ENCODE measurements at regions of chr11 and their contacts with region 1.

Region 1: DNA sequence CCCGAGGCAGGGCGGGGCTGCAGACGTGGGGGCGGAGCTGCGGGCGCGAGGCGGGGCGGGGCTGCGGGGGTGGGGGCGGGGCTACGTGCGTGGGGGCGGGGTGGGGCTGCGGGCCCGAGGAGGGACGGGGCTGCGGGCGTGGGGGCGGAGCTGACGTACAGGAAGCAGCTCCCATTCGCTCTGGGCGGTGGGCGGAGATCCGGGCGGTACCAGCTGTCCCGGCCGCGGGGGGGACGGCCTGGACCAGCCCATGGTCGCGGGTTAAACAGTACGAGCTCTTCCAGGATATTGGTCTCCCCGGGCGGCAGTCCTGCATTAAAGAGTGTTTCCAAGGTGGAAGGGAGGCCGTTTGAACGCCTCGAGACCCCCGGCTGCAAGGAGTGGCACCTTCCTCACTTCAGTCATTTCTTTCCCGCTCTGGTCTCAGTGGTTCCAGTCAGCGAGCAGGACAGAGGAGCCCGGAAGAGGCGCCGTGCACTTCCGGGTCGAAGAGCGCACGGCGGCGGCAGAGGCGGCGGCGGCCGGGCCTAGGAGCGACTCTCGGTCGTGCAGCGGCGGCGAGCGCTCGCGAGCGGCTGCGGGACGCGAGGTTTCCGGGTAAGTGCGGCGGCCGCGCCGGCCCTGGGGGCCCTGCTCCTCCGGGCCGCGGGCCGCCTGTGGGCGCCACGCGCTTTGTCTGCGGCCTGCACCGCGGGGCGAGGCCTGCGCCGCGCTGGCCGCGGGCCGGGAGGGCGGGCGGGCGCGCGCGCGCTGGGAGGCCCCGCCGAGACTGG is at the start of gene PHRF1:
- DNase-seq: peak; percentile 95
- H3K4me3 Mint-ChIP-seq: peak within 1 kb of the TSS; percentile 87
- H3K27ac Mint-ChIP-seq: peak within 1 kb of the TSS; percentile 98
- H3K4me1 Mint-ChIP-seq: peaks cover 45% of the 10 kb centered on the region
- H3K27me3 Mint-ChIP-seq: peaks cover 5% of the 10 kb centered on the region
- total RNA-seq, gene PHRF1: 32.4 to 33.5 TPM

Region 2: DNA sequence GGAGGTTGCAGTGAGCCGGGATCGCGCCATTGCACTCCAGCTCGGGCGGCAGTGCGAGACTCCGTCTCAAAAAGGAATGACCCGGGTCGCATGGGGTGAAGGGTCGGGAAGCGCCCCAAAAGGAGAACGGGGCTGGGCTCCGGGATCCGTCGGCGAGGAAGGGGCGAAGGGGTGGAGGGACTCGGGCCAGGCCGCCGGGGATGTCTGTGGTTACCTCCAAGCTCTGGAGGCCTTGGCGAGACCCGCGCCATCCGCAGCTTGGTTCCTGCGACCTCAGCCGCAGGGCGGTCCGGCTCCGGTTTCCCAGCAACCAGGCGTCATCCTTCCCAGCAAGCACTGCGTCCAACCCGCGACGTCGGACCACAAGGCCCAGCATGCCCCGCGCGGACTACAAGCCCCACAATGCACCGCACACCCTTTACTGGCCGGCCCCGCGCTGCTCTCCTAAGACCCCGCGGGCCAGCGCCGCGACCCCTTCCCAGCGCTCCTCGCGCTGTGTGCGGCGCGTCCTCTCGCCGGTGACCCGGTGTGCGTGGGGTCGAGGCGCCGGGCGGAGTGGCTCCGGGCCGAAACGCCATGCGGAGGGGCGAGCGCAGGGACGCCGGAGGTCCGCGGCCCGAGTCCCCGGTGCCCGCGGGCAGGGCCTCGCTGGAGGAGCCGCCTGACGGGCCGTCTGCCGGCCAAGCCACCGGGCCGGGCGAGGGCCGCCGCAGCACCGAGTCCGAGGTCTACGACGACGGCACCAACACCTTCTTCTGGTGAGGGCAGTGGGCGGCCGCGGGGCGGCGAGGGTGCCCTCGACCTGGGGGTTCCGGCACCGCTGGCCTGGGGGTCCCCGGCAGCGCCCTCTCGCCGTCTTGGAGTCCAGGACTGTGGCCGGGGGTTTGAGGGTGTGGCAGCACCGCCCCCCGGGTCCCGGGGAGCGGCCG is 126.0 kb before region 1 on chr11 and contains the start of gene PTDSS2:
- CTCF ChIA-PET with region 1: no interaction called
- POLR2A ChIA-PET with region 1: no interaction called
- intact Hi-C with region 1: no loop called
- DNase-seq: peak; percentile 97
- H3K4me3 Mint-ChIP-seq: peak within 1 kb of the TSS; percentile 90
- H3K27ac Mint-ChIP-seq: peak within 1 kb of the TSS; percentile 95
- H3K4me1 Mint-ChIP-seq: peaks cover 23% of the 10 kb centered on the region
- H3K27me3 Mint-ChIP-seq: no peaks in the 10 kb centered on the region
- total RNA-seq, gene PTDSS2: 15.0 to 16.7 TPM

Region 3: GRCh38 chr11:560305-561147 is 15.7 kb before region 1 on chr11 and contains the starts of genes LMNTD2 and RASSF7:
- CTCF ChIA-PET with region 1: interaction called, 6 read pairs
- POLR2A ChIA-PET with region 1: interaction called, 6 read pairs
- intact Hi-C with region 1: loop called (anchors 1 kb)
- DNase-seq: peak; percentile 96
- H3K4me3 Mint-ChIP-seq: peak within 1 kb of the TSS; percentile 90
- H3K27ac Mint-ChIP-seq: peak within 1 kb of the TSS; percentile 67
- H3K4me1 Mint-ChIP-seq: peaks cover 14% of the 10 kb centered on the region
- H3K27me3 Mint-ChIP-seq: peaks cover 5% of the 10 kb centered on the region
- total RNA-seq, gene LMNTD2: 3.1 to 3.9 TPM
- total RNA-seq, gene RASSF7: 18.8 to 21.9 TPM

Region 4: GRCh38 chr11:615504-616319 is 39.5 kb after region 1 on chr11 and contains the start of gene IRF7:
- CTCF ChIA-PET with region 1: no interaction called
- POLR2A ChIA-PET with region 1: interaction called, 5 read pairs
- intact Hi-C with region 1: loop called (anchors 5 kb)
- DNase-seq: peak; percentile 94
- H3K4me3 Mint-ChIP-seq: peak within 1 kb of the TSS; percentile 92
- H3K27ac Mint-ChIP-seq: peak within 1 kb of the TSS; percentile 92
- H3K4me1 Mint-ChIP-seq: peaks cover 17% of the 10 kb centered on the region
- H3K27me3 Mint-ChIP-seq: no peaks in the 10 kb centered on the region
- total RNA-seq, gene IRF7: 79.9 to 80.7 TPM

Measured in activated CD4-positive, alpha-beta memory T cell treated with anti-CD3 and anti-CD28 coated beads for 36 hours (primary cell).